K562 (cell line): ENCODE measurements at regions of chr7 and their contacts with region 1.

Region 1: GRCh38 chr7:102165136-102165535 is 121.5 kb upstream of the SH2B2 start:
- DNase-seq: no peak
- ATAC-seq: no peak
- H3K4me3 ChIP-seq: no peak overlapping the region
- H3K27ac ChIP-seq: no peak overlapping the region
- H3K4me1 ChIP-seq: no peaks in the 10 kb centered on the region; a peak in 1 of 5 replicates
- H3K27me3 ChIP-seq: no peaks in the 10 kb centered on the region
- CTCF ChIP-seq: no peak
- EP300 ChIP-seq: no peak
- POLR2A ChIP-seq: no peak
- RAD21 ChIP-seq: no peak

Region 2: DNA sequence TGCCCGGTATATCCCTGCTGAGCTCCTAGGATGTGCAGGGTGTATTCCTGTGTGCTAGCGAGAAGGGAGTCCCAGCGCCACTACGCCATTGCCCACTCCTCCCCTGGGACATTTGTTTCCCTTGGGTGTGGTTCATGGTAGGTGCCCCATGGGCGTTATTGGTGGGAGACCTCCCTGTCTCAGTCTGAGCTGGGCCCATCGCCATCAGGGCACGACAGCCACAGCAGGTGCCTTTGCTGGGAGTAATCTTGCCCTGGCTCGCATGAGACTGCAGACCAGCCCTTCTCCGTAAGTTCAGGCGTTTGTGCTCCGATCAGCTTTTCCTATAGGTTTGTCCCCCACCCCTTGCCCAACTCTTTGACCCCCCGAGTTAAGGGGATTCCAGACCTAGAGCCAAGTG is 15.7 kb before region 1 on chr7:
- CTCF ChIA-PET with region 1: no interaction called
- POLR2A ChIA-PET with region 1: interaction called, 10 read pairs
- in situ Hi-C with region 1: no loop called
- intact Hi-C with region 1: no loop called
- DNase-seq: no peak
- ATAC-seq: no peak
- H3K4me3 ChIP-seq: no peak overlapping the region
- H3K27ac ChIP-seq: no peak overlapping the region
- H3K4me1 ChIP-seq: peaks cover 7 to 19% of the 10 kb centered on the region in 2 experiments; a peak in 4 of 5 replicates
- H3K27me3 ChIP-seq: no peaks in the 10 kb centered on the region
- CTCF ChIP-seq: no peak
- EP300 ChIP-seq: no peak
- POLR2A ChIP-seq: no peak
- RAD21 ChIP-seq: no peak

Region 3: GRCh38 chr7:102236592-102237287 is 71.6 kb after region 1 on chr7:
- CTCF ChIA-PET with region 1: no interaction called
- POLR2A ChIA-PET with region 1: no interaction called
- in situ Hi-C with region 1: no loop called
- intact Hi-C with region 1: no loop called
- DNase-seq: peak; percentile 81 to 88 (median 86)
- ATAC-seq: peak; percentile 98
- H3K4me3 ChIP-seq: no peak overlapping the region
- H3K27ac ChIP-seq: no peak overlapping the region
- H3K4me1 ChIP-seq: peaks cover 0 to 6% of the 10 kb centered on the region in 2 experiments; a peak in 1 of 5 replicates
- H3K27me3 ChIP-seq: no peaks in the 10 kb centered on the region
- CTCF ChIP-seq: peak; percentile 85 to 94 (median 90)
- EP300 ChIP-seq: no peak
- POLR2A ChIP-seq: no peak
- RAD21 ChIP-seq: peak; percentile 93